MCF 10A (cell line): ENCODE measurements at regions of chr6 and their contacts with region 1.

Region 1: DNA sequence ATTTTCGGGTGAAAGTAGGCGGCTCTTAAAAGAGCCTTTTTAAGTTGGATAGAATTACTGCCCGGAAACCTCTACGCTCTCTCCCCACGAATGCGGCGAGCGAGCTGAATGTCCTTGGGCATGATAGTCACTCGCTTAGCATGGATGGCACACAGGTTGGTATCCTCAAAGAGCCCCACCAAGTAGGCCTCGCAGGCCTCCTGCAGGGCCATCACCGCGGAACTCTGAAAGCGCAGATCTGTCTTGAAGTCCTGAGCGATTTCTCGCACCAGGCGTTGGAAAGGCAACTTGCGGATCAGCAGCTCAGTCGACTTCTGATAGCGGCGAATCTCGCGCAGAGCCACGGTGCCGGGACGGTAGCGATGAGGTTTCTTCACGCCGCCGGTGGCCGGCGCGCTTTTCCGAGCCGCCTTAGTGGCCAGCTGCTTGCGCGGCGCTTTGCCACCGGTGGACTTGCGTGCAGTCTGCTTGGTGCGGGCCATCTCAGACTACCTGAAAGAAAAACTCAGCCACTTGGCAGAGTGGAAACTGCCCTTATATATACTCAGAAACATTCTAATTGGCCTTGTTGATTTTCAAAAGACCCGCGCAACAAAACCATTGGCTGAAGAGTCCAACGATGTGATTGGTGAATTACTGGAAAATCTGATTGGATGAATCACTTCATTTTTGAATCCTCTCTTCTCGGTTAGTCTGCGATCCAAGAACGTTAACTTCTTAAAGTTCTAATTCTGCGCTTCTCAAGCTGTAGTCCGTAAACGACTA is 93.9 kb upstream of the BTN3A2 start:
- DNase-seq: peak; percentile 97
- H3K4me3 Mint-ChIP-seq: no peak overlapping the region
- H3K27ac Mint-ChIP-seq: peak overlapping the region; percentile 54
- H3K4me1 Mint-ChIP-seq: peaks cover 6% of the 10 kb centered on the region
- H3K27me3 Mint-ChIP-seq: no peaks in the 10 kb centered on the region
- CTCF ChIP-seq: no peak

Region 2: GRCh38 chr6:26175428-26176181 is 95.5 kb before region 1 on chr6:
- CTCF ChIA-PET with region 1: interaction called, 3 read pairs
- POLR2A ChIA-PET with region 1: interaction called, 9 read pairs
- intact Hi-C with region 1: loop called (anchors 1 kb)
- DNase-seq: peak; percentile 82
- H3K4me3 Mint-ChIP-seq: peak overlapping the region; percentile 23
- H3K27ac Mint-ChIP-seq: peak overlapping the region; percentile 70
- H3K4me1 Mint-ChIP-seq: peaks cover 28% of the 10 kb centered on the region
- H3K27me3 Mint-ChIP-seq: no peaks in the 10 kb centered on the region
- CTCF ChIP-seq: peak; percentile 70

Region 3: GRCh38 chr6:26223650-26224546 is 47.2 kb before region 1 on chr6:
- CTCF ChIA-PET with region 1: interaction called, 10 read pairs
- POLR2A ChIA-PET with region 1: interaction called, 405 read pairs
- intact Hi-C with region 1: loop called (anchors 2 kb)
- DNase-seq: peak; percentile 91
- H3K4me3 Mint-ChIP-seq: no peak overlapping the region
- H3K27ac Mint-ChIP-seq: no peak overlapping the region
- H3K4me1 Mint-ChIP-seq: peaks cover 6% of the 10 kb centered on the region
- H3K27me3 Mint-ChIP-seq: no peaks in the 10 kb centered on the region
- CTCF ChIP-seq: no peak

Region 4: GRCh38 chr6:26258200-26258977 is 12.7 kb before region 1 on chr6:
- CTCF ChIA-PET with region 1: interaction called, 11 read pairs
- POLR2A ChIA-PET with region 1: interaction called, 55 read pairs
- intact Hi-C with region 1: no loop called
- DNase-seq: peak; percentile 24
- H3K4me3 Mint-ChIP-seq: no peak overlapping the region
- H3K27ac Mint-ChIP-seq: no peak overlapping the region
- H3K4me1 Mint-ChIP-seq: peaks cover 2% of the 10 kb centered on the region
- H3K27me3 Mint-ChIP-seq: no peaks in the 10 kb centered on the region
- CTCF ChIP-seq: peak; percentile 16

Region 5: GRCh38 chr6:26431258-26432172 is 160.4 kb after region 1 on chr6:
- CTCF ChIA-PET with region 1: no interaction called
- POLR2A ChIA-PET with region 1: no interaction called
- intact Hi-C with region 1: no loop called
- DNase-seq: peak; percentile 38
- H3K4me3 Mint-ChIP-seq: peak overlapping the region; percentile 2
- H3K27ac Mint-ChIP-seq: peak overlapping the region; percentile 84
- H3K4me1 Mint-ChIP-seq: peaks cover 24% of the 10 kb centered on the region
- H3K27me3 Mint-ChIP-seq: no peaks in the 10 kb centered on the region
- CTCF ChIP-seq: no peak

Region 6: DNA sequence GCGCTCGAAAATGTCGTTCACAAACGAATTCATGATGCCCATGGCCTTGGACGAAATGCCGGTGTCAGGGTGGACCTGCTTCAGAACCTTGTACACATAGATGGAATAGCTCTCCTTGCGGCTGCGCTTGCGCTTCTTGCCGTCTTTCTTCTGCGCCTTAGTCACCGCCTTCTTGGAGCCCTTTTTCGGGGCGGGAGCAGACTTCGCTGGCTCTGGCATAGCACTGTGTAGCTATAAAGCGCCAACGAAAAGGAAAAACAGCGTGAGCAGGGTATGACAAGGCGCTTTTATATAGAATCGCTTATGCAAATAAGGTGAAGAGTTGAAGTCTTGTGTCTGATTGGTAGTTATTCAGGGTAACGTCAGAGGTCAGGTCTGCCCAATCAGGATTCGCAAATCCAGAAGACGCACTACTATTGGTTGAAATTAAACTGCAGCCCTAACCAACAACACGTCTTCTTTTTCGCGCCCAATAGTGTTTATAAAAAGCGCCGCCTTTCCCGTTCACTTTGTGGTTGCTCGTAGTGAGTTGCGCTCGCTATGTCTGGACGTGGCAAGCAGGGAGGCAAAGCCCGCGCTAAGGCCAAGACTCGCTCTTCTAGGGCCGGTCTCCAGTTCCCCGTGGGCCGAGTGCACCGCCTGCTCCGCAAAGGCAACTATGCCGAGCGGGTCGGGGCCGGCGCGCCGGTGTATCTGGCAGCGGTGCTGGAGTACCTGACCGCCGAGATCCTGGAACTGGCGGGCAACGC is 861.6 kb after region 1 on chr6:
- CTCF ChIA-PET with region 1: no interaction called
- POLR2A ChIA-PET with region 1: interaction called, 43 read pairs
- intact Hi-C with region 1: loop called (anchors 5 kb)
- DNase-seq: peak; percentile 99
- H3K4me3 Mint-ChIP-seq: no peak overlapping the region
- H3K27ac Mint-ChIP-seq: no peak overlapping the region
- H3K4me1 Mint-ChIP-seq: peaks cover 11% of the 10 kb centered on the region
- H3K27me3 Mint-ChIP-seq: no peaks in the 10 kb centered on the region
- CTCF ChIP-seq: no peak

Region 7: DNA sequence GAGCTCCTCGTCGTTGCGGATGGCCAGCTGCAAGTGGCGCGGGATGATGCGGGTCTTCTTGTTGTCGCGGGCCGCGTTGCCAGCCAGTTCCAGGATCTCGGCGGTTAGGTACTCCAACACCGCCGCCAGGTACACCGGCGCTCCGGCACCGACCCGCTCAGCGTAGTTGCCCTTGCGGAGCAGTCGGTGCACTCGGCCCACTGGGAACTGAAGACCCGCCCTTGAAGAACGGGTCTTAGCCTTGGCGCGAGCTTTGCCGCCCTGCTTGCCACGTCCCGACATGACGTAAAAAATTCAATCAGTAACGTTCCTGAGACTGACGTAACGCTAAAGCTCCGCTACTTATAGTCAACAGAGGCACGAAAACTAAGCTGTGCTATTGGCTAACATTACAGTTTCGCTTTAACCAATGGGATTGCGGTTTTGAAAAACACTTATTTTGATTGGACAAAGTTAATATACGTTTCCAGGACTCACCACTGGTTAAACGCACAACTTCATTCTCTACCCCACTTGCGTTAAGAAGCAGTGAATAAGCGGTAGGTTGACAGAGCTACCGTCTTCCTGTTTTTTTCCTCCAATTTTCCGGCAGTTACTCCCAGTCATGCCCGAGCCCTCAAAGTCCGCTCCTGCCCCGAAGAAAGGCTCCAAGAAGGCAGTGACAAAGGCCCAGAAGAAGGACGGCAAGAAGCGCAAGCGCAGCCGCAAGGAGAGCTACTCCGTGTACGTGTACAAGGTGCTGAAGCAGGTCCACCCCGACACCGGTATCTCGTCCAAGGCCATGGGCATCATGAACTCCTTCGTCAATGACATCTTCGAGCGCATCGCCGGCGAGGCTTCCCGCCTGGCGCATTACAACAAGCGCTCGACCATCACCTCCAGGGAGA is 1567.2 kb after region 1 on chr6:
- CTCF ChIA-PET with region 1: no interaction called
- POLR2A ChIA-PET with region 1: interaction called, 38 read pairs
- intact Hi-C with region 1: no loop called
- DNase-seq: peak; percentile 98
- H3K4me3 Mint-ChIP-seq: no peak overlapping the region
- H3K27ac Mint-ChIP-seq: no peak overlapping the region
- H3K4me1 Mint-ChIP-seq: peaks cover 32% of the 10 kb centered on the region
- H3K27me3 Mint-ChIP-seq: no peaks in the 10 kb centered on the region
- CTCF ChIP-seq: no peak